ENCODE measurements at regions of chr2 and their contacts with region 1.

Region 1: GRCh38 chr2:159076241-159076640 is 107.8 kb downstream of the TANC1 start:
- DNase-seq: peak; percentile 87
- H3K4me3 ChIP-seq: no peak overlapping the region
- H3K27ac ChIP-seq: peak overlapping the region; percentile 46
- H3K4me1 ChIP-seq: peaks cover 66% of the 10 kb centered on the region
- H3K27me3 ChIP-seq: no peaks in the 10 kb centered on the region
- CTCF ChIP-seq: no peak
- POLR2A ChIP-seq: no peak

Region 2: DNA sequence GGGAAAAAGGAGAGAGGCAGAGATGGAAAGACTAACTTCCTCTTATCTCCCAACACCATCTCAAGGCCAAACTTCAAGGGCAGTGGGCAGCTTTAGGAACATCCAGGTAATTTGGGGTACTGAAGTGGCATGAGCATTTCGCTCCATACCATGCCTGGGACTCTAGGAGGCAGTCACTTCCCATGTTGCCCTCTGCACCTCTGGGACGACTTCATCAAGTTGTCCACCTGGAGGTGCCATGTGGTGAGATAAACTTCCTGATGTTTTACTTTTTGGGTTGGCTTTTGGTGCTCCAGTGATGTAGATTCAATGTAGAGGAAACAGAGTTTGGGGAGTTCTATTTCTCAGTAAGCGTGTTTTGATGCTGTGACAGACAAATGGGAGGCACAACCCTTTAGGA is 1030.9 kb before region 1 on chr2:
- CTCF ChIA-PET with region 1: no interaction called
- POLR2A ChIA-PET with region 1: no interaction called
- dilution Hi-C with region 1: no loop called
- intact Hi-C with region 1: no loop called
- DNase-seq: no peak
- H3K4me3 ChIP-seq: no peak overlapping the region
- H3K27ac ChIP-seq: no peak overlapping the region
- H3K4me1 ChIP-seq: no peaks in the 10 kb centered on the region
- H3K27me3 ChIP-seq: peaks cover 0 to 10% of the 10 kb centered on the region in 2 experiments
- CTCF ChIP-seq: no peak
- POLR2A ChIP-seq: no peak

Region 3: DNA sequence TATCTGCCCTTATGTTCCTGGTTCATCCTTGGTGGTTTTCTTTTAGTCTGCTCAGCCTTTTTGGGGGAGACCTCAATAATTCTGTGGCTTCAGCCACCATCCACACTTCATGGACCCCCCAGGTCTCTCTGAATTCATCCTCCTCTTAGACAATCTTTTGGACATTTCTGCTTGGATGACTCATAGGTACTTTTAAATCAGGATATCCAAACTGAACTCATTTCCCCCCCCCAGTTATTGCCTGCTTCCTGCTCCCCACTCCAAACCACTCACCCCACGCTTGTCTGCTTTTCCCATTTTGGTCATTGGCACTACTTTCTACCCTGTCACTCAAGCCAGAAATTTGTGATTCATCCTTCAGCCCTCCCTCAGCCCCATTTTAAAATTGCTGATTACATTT is 29.3 kb before region 1 on chr2:
- CTCF ChIA-PET with region 1: no interaction called
- POLR2A ChIA-PET with region 1: no interaction called
- dilution Hi-C with region 1: no loop called
- intact Hi-C with region 1: loop called (anchors 2 kb)
- DNase-seq: peak; percentile 77
- H3K4me3 ChIP-seq: no peak overlapping the region
- H3K27ac ChIP-seq: peak overlapping the region; percentile 35
- H3K4me1 ChIP-seq: peaks cover 36% of the 10 kb centered on the region
- H3K27me3 ChIP-seq: no peaks in the 10 kb centered on the region
- CTCF ChIP-seq: no peak
- POLR2A ChIP-seq: no peak

Region 4: GRCh38 chr2:159090514-159091201 is 14.4 kb after region 1 on chr2:
- CTCF ChIA-PET with region 1: interaction called, 11 read pairs
- POLR2A ChIA-PET with region 1: no interaction called
- dilution Hi-C with region 1: no loop called
- intact Hi-C with region 1: loop called (anchors 1 kb)
- DNase-seq: peak; percentile 57
- H3K4me3 ChIP-seq: no peak overlapping the region
- H3K27ac ChIP-seq: peak overlapping the region; percentile 97
- H3K4me1 ChIP-seq: peaks cover 85% of the 10 kb centered on the region
- H3K27me3 ChIP-seq: no peaks in the 10 kb centered on the region
- CTCF ChIP-seq: no peak
- POLR2A ChIP-seq: no peak

Region 5: GRCh38 chr2:159098815-159099455 is 22.7 kb after region 1 on chr2:
- CTCF ChIA-PET with region 1: no interaction called
- POLR2A ChIA-PET with region 1: no interaction called
- dilution Hi-C with region 1: no loop called
- intact Hi-C with region 1: loop called (anchors 2 kb)
- DNase-seq: peak; percentile 81
- H3K4me3 ChIP-seq: peak overlapping the region in 1 of 3 experiments; percentile 44
- H3K27ac ChIP-seq: peak overlapping the region; percentile 92
- H3K4me1 ChIP-seq: peaks cover 55% of the 10 kb centered on the region
- H3K27me3 ChIP-seq: no peaks in the 10 kb centered on the region
- CTCF ChIP-seq: no peak
- POLR2A ChIP-seq: peak; percentile 64